Naive thymus-derived CD4-positive, alpha-beta T cell (primary cell): ENCODE measurements at regions of chr12 and their contacts with region 1.

Region 1: GRCh38 chr12:95003213-95003920 is at the start of gene NDUFA12:
- DNase-seq: peak; percentile 89 to 95 (median 92)
- ATAC-seq: peak; percentile 100
- H3K4me3 ChIP-seq: peak within 1 kb of the TSS; percentile 72
- H3K4me3 Mint-ChIP-seq: peak within 1 kb of the TSS; percentile 87 to 97 (median 96)
- H3K27ac ChIP-seq: peak within 1 kb of the TSS; percentile 84
- H3K27ac Mint-ChIP-seq: peak within 1 kb of the TSS; percentile 86 to 97 (median 95)
- H3K4me1 ChIP-seq: peaks cover 27 to 56% of the 10 kb centered on the region in 2 donors
- H3K4me1 Mint-ChIP-seq: peaks cover 39 to 79% (median 64%) of the 10 kb centered on the region in 7 donors
- H3K27me3 ChIP-seq: no peaks in the 10 kb centered on the region
- H3K27me3 Mint-ChIP-seq: no peaks in the 10 kb centered on the region
- total RNA-seq, gene NDUFA12: 57.8 to 123 (median 68.5) TPM

Region 2: DNA sequence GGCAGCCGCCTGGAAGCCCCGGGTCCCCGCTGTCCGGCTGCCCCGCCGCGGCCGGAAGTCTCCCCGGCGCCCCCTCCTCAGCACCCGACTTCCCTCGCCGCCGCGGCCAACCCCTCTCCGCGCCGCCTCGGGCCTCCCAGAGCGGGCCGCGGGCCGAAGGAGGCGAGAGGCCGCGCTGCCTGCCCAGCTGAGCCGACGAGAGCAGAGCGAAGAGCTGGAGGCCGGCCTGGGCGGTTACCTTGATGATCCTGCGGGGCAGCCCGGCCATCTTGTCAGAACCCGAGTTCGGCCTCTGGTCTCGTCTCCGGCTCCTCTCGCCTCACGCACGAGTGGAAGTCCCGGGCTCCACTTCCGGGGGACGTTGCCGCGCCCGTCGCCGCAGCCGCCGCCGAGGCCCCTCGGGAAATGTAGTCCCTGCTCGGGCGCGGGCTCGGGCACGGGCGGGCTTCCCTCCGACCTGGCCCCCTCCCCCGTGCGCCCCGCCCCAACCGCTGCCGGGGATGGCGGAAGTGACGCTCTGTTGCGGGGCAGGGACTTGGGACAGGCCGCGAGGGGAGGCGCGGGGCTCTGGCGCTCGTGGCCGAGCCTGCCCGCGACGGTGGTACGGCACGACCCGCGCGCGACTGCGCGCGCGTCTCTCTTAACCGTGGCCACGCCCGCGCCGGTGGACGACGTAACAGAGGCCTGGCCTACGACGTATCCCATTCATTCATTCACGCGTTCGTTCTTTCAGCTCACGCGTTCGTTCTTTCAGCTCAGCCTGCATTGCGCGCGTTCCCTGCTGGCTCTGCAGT is 1561.6 kb before region 1 on chr12 and contains the start of gene UBE2N:
- CTCF ChIA-PET with region 1: no interaction called
- POLR2A ChIA-PET with region 1: no interaction called
- intact Hi-C with region 1: loop called in 1 of 2 experiments (anchors 1 kb)
- DNase-seq: peak; percentile 96 to 98 (median 97)
- ATAC-seq: peak; percentile 95
- H3K4me3 ChIP-seq: peak within 1 kb of the TSS; percentile 66
- H3K4me3 Mint-ChIP-seq: peak within 1 kb of the TSS; percentile 89 to 100 (median 97)
- H3K27ac ChIP-seq: peak within 1 kb of the TSS; percentile 98
- H3K27ac Mint-ChIP-seq: peak within 1 kb of the TSS; percentile 96 to 100 (median 98)
- H3K4me1 ChIP-seq: peaks cover 35 to 48% of the 10 kb centered on the region in 2 donors
- H3K4me1 Mint-ChIP-seq: peaks cover 44 to 54% (median 49%) of the 10 kb centered on the region in 7 donors
- H3K27me3 ChIP-seq: no peaks in the 10 kb centered on the region
- H3K27me3 Mint-ChIP-seq: no peaks in the 10 kb centered on the region
- total RNA-seq, gene UBE2N: 76.6 to 180 (median 77.5) TPM

Region 3: GRCh38 chr12:94851396-94852028 is 151.9 kb before region 1 on chr12:
- CTCF ChIA-PET with region 1: no interaction called
- POLR2A ChIA-PET with region 1: no interaction called
- intact Hi-C with region 1: no loop called
- DNase-seq: no peak
- ATAC-seq: no peak
- H3K4me3 ChIP-seq: no peak overlapping the region
- H3K4me3 Mint-ChIP-seq: no peak overlapping the region
- H3K27ac ChIP-seq: no peak overlapping the region
- H3K27ac Mint-ChIP-seq: no peak overlapping the region
- H3K4me1 ChIP-seq: no peaks in the 10 kb centered on the region
- H3K4me1 Mint-ChIP-seq: peaks cover 0 to 2% (median 0%) of the 10 kb centered on the region in 7 donors
- H3K27me3 ChIP-seq: no peaks in the 10 kb centered on the region
- H3K27me3 Mint-ChIP-seq: peaks cover 4 to 25% (median 15%) of the 10 kb centered on the region in 5 donors

Region 4: GRCh38 chr12:94980577-94980976 is 22.8 kb before region 1 on chr12:
- CTCF ChIA-PET with region 1: interaction called, 6 read pairs
- POLR2A ChIA-PET with region 1: interaction called, 10 read pairs
- intact Hi-C with region 1: loop called in 1 of 2 experiments (anchors 1 kb)
- DNase-seq: peak in 7 of 9 donors; percentile 20 to 73 (median 60)
- ATAC-seq: peak; percentile 76
- H3K4me3 ChIP-seq: no peak overlapping the region
- H3K4me3 Mint-ChIP-seq: peak overlapping the region in 9 of 10 donors; percentile 24 to 73 (median 59)
- H3K27ac ChIP-seq: no peak overlapping the region
- H3K27ac Mint-ChIP-seq: peak overlapping the region in 8 of 9 donors; percentile 30 to 86 (median 72)
- H3K4me1 ChIP-seq: peaks cover 0 to 32% of the 10 kb centered on the region in 2 donors
- H3K4me1 Mint-ChIP-seq: peaks cover 22 to 88% (median 67%) of the 10 kb centered on the region in 7 donors
- H3K27me3 ChIP-seq: no peaks in the 10 kb centered on the region
- H3K27me3 Mint-ChIP-seq: no peaks in the 10 kb centered on the region

Region 5: GRCh38 chr12:95072900-95073697 is 69.7 kb after region 1 on chr12 and contains the start of gene NR2C1:
- CTCF ChIA-PET with region 1: interaction called, 3 read pairs
- POLR2A ChIA-PET with region 1: interaction called, 4 read pairs
- intact Hi-C with region 1: loop called (anchors 1 kb)
- DNase-seq: peak; percentile 76 to 95 (median 92)
- ATAC-seq: peak; percentile 98
- H3K4me3 ChIP-seq: peak within 1 kb of the TSS; percentile 81
- H3K4me3 Mint-ChIP-seq: peak within 1 kb of the TSS; percentile 92 to 98 (median 94)
- H3K27ac ChIP-seq: peak within 1 kb of the TSS; percentile 81
- H3K27ac Mint-ChIP-seq: peak within 1 kb of the TSS; percentile 84 to 96 (median 93)
- H3K4me1 ChIP-seq: peaks cover 0 to 9% of the 10 kb centered on the region in 2 donors
- H3K4me1 Mint-ChIP-seq: peaks cover 8 to 40% (median 30%) of the 10 kb centered on the region in 7 donors
- H3K27me3 ChIP-seq: no peaks in the 10 kb centered on the region
- H3K27me3 Mint-ChIP-seq: peaks cover 0 to 5% (median 0%) of the 10 kb centered on the region in 5 donors
- total RNA-seq, gene NR2C1: 30.5 to 66.8 (median 58.7) TPM

Region 6: GRCh38 chr12:95858479-95859343 is 855.3 kb after region 1 on chr12 and contains the start of gene SNRPF:
- CTCF ChIA-PET with region 1: no interaction called
- POLR2A ChIA-PET with region 1: no interaction called
- intact Hi-C with region 1: loop called (anchors 2 kb)
- DNase-seq: peak; percentile 88 to 96 (median 92)
- ATAC-seq: peak; percentile 98
- H3K4me3 ChIP-seq: peak within 1 kb of the TSS; percentile 82
- H3K4me3 Mint-ChIP-seq: no peak within 1 kb of the TSS
- H3K27ac ChIP-seq: peak within 1 kb of the TSS; percentile 86
- H3K27ac Mint-ChIP-seq: no peak within 1 kb of the TSS
- H3K4me1 ChIP-seq: peaks cover 11 to 12% of the 10 kb centered on the region in 2 donors
- H3K4me1 Mint-ChIP-seq: peaks cover 13 to 27% (median 16%) of the 10 kb centered on the region in 7 donors
- H3K27me3 ChIP-seq: no peaks in the 10 kb centered on the region
- H3K27me3 Mint-ChIP-seq: peaks cover 3 to 11% (median 7%) of the 10 kb centered on the region in 5 donors
- total RNA-seq, gene SNRPF: 19.0 to 40.4 (median 21.7) TPM